Activated T-helper 2 cell treated with anti-CD3 and anti-CD28 coated beads, Interferon-gamma antibody, Interleukin-2, Interleukin-4, amounts not matched to agents 10 μg/mL and 5 μg/mL and 100 μg/mL, durations not matched to agents 14 hours and 24 hours and 36 hours (primary cell): ENCODE measurements at regions of chr3 and their contacts with region 1.

Region 1: DNA sequence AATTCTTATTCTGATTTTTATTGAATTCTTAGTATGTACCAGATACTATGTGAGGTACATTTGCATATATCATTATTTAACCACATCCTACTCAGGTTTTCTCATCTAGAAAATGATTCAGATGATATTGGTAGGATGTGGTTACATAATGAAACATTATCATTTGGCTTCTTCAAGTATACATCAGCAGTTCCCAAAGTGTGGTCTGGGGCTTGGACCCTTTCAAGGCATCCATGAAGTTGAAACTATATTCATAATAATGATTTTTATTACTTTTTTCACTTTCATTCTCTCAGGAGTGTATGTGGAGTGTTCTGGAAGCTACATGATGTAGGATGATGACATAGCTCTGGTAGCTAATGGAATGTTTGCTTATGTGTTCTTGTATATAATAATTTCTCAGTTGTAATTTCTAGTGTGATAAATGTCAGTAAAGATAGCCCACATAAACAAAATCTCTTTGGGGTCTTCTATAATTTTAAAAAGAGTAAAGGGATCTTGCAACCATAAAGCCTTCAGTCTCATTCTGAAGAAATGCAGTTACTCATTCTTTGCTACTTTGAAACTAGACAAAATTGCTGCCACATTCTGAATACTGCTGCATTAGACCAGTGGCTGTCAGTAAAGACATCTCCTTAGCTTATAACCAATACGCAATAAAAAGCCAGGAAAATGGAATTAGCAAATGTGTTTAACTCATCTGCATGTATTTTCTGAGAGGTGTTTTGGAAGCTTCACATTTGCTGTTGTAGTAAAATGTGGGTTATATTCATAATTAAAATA is 95.8 kb downstream of the PPARG start:
- DNase-seq: no peak
- H3K4me3 Mint-ChIP-seq: no peak overlapping the region
- H3K27ac Mint-ChIP-seq: no peak overlapping the region
- H3K4me1 Mint-ChIP-seq: peaks cover 34% of the 10 kb centered on the region
- H3K27me3 Mint-ChIP-seq: peaks cover 12% of the 10 kb centered on the region

Region 2: DNA sequence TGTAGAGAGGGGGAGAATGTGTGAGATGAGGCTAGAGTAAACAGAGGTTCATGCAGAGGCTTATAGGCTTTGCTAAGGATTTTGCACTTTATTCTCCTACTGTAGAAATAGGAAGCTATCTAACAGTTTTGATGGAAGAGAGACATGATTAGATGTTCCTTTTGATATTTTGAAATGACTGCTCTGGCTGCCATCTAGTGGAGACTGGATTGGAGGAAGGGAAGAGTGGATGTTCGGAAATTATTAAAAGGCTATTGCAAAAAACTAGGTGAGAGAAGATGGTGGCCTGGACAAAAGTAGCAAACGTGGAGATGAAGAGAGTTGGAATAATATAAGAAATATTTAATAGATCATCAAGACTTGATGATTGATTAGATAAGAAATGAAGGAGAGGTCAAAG is 338.2 kb before region 1 on chr3:
- intact Hi-C with region 1: no loop called
- DNase-seq: no peak
- H3K4me3 Mint-ChIP-seq: no peak overlapping the region
- H3K27ac Mint-ChIP-seq: no peak overlapping the region
- H3K4me1 Mint-ChIP-seq: no peaks in the 10 kb centered on the region
- H3K27me3 Mint-ChIP-seq: peaks cover 8% of the 10 kb centered on the region

Region 3: DNA sequence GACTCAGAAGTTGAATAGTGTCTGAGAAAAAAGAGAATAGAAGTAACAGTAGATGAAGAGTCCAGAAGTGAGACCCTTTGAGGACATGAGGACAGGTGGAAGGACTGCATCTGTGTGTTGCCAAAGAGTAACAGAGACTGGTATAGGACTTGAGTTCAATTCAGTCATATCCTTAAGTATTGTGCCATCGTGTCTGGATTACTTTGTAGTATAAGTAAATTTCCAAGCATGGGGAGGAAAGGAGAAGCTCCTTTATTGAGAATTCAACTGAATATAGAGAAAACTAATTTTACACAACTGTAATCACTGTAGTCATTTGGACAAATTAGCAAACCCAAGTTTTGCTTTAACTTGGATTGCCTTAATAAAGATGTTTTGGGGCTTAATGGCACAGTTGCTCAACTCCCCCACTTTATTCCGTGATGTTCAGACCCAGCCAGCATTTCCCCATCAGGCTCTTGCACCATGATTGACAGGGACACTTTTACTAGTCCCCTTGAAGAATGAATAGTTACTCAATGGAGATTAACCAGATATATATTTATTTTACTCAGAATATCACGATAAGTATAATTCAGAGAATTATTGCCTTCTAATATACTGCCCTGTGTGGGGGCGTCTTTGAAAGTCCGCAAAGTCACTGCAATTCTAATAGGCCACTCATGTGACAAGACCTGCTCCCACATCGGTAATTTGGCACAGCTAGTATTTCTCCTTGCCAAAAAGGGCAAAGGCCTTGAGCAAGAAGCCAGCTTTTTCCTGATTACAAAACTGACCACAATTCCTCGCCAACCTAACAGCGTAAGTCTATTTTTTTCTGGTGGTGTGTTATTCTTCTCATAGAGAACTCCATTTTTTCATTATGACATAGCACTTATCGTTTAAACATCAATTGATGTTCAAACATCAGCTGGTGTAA is 34.5 kb before region 1 on chr3:
- intact Hi-C with region 1: loop called (anchors 5 kb)
- DNase-seq: no peak
- H3K4me3 Mint-ChIP-seq: no peak overlapping the region
- H3K27ac Mint-ChIP-seq: no peak overlapping the region
- H3K4me1 Mint-ChIP-seq: peaks cover 20% of the 10 kb centered on the region
- H3K27me3 Mint-ChIP-seq: peaks cover 12% of the 10 kb centered on the region